PC-9 (cell line): ENCODE measurements at regions of chr22 and their contacts with region 1.

Region 1: GRCh38 chr22:49600891-49601431 is 226.7 kb downstream of the BRD1 start:
- DNase-seq: no peak
- H3K4me3 ChIP-seq: no peak overlapping the region
- H3K27ac ChIP-seq: no peak overlapping the region
- H3K4me1 ChIP-seq: no peaks in the 10 kb centered on the region
- H3K27me3 ChIP-seq: peaks cover 76% of the 10 kb centered on the region
- CTCF ChIP-seq: no peak

Region 2: DNA sequence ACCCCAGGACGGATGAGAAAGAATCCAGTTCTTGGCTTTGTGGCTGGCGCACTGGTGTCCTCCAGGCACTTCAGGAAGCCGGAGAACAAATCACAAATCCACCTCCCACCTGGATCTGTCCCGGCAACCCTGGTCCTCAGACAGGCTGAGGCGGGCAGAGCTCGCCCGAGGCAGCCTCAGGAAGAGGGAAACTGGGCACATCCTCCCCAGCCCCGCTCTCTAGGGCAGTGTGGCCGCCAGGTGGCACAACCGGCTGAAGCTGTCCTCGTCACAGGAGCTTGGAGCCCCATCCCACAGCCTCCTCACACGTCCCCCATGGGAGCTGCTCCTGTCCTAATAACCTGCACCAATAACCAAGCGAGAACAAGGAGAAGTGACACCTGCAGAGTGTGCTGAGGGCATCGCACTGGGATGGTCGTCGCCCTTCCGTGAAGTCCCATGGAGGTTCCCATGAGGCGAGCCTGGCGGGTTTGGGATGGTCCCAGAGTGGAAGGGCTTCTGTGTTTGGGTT is 166.8 kb before region 1 on chr22:
- CTCF ChIA-PET with region 1: no interaction called
- POLR2A ChIA-PET with region 1: no interaction called
- intact Hi-C with region 1: loop called (anchors 5 kb)
- DNase-seq: peak in 1 of 2 experiments; percentile 39
- H3K4me3 ChIP-seq: no peak overlapping the region
- H3K27ac ChIP-seq: no peak overlapping the region
- H3K4me1 ChIP-seq: no peaks in the 10 kb centered on the region
- H3K27me3 ChIP-seq: peaks cover 95% of the 10 kb centered on the region
- CTCF ChIP-seq: peak; percentile 75

Region 3: DNA sequence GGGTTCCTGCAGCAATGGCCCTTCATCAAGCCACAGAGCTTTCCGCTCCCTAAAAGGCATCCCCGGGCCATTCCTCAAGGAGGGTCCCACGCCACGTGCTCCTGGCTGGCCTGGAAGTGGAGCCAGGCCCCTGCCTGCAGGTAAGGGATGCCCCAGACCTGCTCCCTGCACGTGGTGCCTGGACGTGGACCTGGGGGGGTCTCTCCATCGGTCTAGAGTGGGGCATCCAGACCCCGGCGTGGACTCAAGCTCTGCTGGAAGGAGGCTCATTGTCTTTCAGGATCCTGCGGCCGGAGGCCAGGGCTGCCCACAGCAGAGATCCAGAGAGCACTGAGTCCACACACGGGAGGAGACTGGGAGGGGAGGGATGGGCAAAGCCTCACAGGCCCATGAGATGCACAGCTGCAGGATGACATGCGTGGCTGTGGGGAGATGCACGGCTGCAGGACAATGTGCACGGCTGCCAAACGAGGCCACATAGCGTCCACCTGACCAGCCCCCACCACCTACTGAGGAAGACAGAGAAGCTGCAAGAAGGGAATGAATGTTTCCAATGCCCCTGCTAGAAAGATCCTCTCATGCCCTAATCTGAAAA is 10.0 kb before region 1 on chr22:
- CTCF ChIA-PET with region 1: no interaction called
- POLR2A ChIA-PET with region 1: interaction called, 14 read pairs
- intact Hi-C with region 1: no loop called
- DNase-seq: no peak
- H3K4me3 ChIP-seq: no peak overlapping the region
- H3K27ac ChIP-seq: no peak overlapping the region
- H3K4me1 ChIP-seq: no peaks in the 10 kb centered on the region
- H3K27me3 ChIP-seq: peaks cover 82% of the 10 kb centered on the region
- CTCF ChIP-seq: no peak

Region 4: DNA sequence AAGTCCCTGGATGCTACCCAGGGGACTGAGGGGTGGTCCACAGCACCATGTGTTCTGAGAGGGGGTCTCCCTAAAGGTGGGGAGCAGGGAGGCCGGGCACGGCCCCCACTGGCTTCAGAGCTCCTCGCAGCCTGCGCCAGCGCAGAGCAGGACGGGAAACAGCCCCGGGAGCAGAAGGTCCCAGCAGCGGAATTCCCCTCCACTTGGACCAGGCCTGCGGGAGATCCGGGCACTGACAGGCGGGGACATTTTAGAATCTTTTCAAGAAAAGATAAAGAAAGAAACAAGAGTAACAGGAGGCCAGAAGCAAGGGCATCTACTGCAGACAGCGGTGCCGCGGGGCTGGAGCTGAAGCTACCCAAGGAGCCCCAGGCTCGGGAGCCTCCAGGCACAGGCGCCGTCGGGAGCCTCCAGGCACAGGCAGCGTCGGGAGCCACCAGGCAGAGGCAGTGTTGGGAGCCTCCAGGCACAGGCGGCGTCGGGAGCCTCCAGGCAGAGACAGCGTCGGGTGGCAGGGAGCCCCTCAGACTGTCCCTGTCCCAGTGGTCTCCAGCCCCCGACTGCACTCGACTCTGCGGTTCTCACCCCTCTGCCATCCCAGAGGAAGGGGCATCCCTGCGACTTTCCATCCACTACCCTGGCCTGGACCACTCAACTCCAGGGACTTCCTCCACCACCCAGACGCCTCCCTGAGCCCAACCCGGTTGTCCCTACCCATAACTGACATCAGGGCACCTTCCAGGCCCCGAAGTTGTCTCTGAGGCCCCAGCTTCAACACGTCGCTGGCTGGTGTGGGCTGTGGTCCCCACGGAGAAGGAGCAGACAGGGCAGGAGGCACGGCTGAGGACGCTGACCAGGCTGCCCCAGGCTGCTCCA is 15.6 kb after region 1 on chr22:
- CTCF ChIA-PET with region 1: no interaction called
- POLR2A ChIA-PET with region 1: no interaction called
- intact Hi-C with region 1: no loop called
- DNase-seq: no peak
- H3K4me3 ChIP-seq: no peak overlapping the region
- H3K27ac ChIP-seq: no peak overlapping the region
- H3K4me1 ChIP-seq: no peaks in the 10 kb centered on the region
- H3K27me3 ChIP-seq: peaks cover 88% of the 10 kb centered on the region
- CTCF ChIP-seq: no peak

Region 5: GRCh38 chr22:49632199-49633009 is 31.4 kb after region 1 on chr22:
- CTCF ChIA-PET with region 1: no interaction called
- POLR2A ChIA-PET with region 1: no interaction called
- intact Hi-C with region 1: no loop called
- DNase-seq: peak in 1 of 2 experiments; percentile 57
- H3K4me3 ChIP-seq: no peak overlapping the region
- H3K27ac ChIP-seq: no peak overlapping the region
- H3K4me1 ChIP-seq: no peaks in the 10 kb centered on the region
- H3K27me3 ChIP-seq: peaks cover 90% of the 10 kb centered on the region
- CTCF ChIP-seq: peak; percentile 78

Region 6: GRCh38 chr22:49852898-49853894 is 252.2 kb after region 1 on chr22 and contains the start of gene ZBED4:
- CTCF ChIA-PET with region 1: no interaction called
- POLR2A ChIA-PET with region 1: no interaction called
- intact Hi-C with region 1: no loop called
- DNase-seq: peak; percentile 91 to 99
- H3K4me3 ChIP-seq: peak within 1 kb of the TSS; percentile 74
- H3K27ac ChIP-seq: peak within 1 kb of the TSS; percentile 76
- H3K4me1 ChIP-seq: peaks cover 21% of the 10 kb centered on the region
- H3K27me3 ChIP-seq: no peaks in the 10 kb centered on the region
- CTCF ChIP-seq: no peak
- total RNA-seq, gene ZBED4: 18.2 and 21.4 TPM in 2 replicates